ENCODE measurements at regions of chr4 and their contacts with region 1.

Region 1: GRCh38 chr4:40550948-40551462 is 78.7 kb downstream of the RBM47 start:
- DNase-seq: no peak
- H3K4me3 ChIP-seq: peak overlapping the region; percentile 34
- H3K27ac ChIP-seq: no peak overlapping the region
- H3K27me3 ChIP-seq: no peaks in the 10 kb centered on the region
- CTCF ChIP-seq: peak; percentile 53

Region 2: DNA sequence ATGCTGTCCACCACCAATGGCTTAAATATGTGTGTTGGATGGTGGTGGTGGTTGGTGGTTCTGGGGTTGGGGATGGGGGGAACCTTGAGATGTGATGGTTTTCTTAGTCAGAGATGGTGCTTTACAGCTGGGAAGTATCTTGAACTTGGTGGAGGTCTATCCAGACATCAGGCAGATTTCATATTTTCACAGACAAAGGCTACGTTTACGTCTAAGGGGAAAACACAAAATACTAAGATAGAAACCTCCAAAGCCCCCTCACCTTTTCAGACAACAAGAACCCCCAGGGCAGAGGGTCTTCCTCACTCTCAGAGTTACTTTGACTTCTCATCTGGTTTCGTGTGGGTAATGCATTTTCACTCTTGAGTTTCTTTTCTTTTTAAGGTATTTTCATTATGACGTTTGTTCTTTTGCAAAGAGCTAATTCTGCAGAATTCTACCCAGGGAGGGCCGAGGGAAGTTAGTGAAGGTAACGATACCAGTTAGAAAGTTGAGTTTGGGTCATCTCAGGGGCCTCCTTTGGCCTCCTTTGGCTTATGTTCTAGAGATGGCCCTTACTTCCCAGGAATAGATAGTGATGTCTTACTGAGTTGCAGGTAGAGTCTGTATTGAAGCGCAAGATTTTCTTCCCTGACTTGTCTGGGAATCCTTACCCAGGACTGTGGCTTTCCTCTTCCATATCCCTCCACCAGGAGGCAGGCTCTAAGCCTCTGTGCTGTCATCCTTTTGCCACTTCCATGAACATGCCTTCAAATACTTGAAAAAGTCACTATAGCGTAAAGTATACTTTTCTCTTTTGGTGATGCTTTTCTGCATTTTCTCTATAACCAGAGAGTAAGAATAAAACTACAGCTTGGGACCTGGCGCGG is 322.3 kb before region 1 on chr4:
- CTCF ChIA-PET with region 1: no interaction called
- POLR2A ChIA-PET with region 1: no interaction called
- DNase-seq: no peak
- H3K4me3 ChIP-seq: no peak overlapping the region
- H3K27ac ChIP-seq: no peak overlapping the region
- H3K27me3 ChIP-seq: no peaks in the 10 kb centered on the region
- CTCF ChIP-seq: peak; percentile 44; the same call in 1 of the 2 replicates

Region 3: GRCh38 chr4:40526741-40527140 is 24.3 kb before region 1 on chr4:
- CTCF ChIA-PET with region 1: no interaction called
- POLR2A ChIA-PET with region 1: interaction called, 10 read pairs
- DNase-seq: no peak
- H3K4me3 ChIP-seq: no peak overlapping the region
- H3K27ac ChIP-seq: no peak overlapping the region
- H3K27me3 ChIP-seq: no peaks in the 10 kb centered on the region
- CTCF ChIP-seq: no peak

Measured in AG04450 (cell line).